ENCODE measurements at regions of chr15 and their contacts with region 1.

Region 1: GRCh38 chr15:94163999-94164807 is 67.2 kb upstream of the MCTP2 start:
- DNase-seq: peak in 1 of 2 donors; percentile 15
- ATAC-seq: peak in 1 of 4 donors; percentile 46
- H3K4me3 ChIP-seq: no peak overlapping the region
- H3K27ac ChIP-seq: no peak overlapping the region
- H3K4me1 ChIP-seq: no peaks in the 10 kb centered on the region
- H3K27me3 ChIP-seq: no peaks in the 10 kb centered on the region
- CTCF ChIP-seq: peak; percentile 56

Region 2: DNA sequence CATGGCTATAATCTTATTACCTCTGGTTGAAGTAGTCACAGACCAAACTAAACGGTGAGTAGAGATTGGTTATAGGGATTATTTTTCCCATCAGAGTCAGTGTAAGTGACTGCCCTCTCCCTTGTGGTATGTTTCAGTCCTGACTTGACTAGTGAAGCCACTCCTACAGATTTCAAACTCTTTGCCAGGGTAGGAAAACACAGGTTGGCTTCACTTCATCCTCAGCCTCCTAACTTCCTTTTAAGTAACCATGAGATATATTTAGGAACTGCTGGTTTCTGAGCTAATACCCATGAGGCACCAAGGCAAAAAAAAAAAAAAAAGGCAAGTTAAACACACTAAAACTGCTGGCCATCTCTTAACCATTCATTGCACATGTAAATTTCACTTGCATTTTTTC is 282.1 kb before region 1 on chr15:
- intact Hi-C with region 1: no loop called
- DNase-seq: no peak
- ATAC-seq: no peak
- H3K4me3 ChIP-seq: no peak overlapping the region
- H3K27ac ChIP-seq: no peak overlapping the region
- H3K4me1 ChIP-seq: no peaks in the 10 kb centered on the region
- H3K27me3 ChIP-seq: no peaks in the 10 kb centered on the region
- CTCF ChIP-seq: no peak

Region 3: GRCh38 chr15:94324117-94324826 is 160.1 kb after region 1 on chr15:
- intact Hi-C with region 1: loop called (anchors 2 to 5 kb)
- DNase-seq: peak in 1 of 2 donors; percentile 21
- ATAC-seq: peak; percentile 71 to 92 (median 87)
- H3K4me3 ChIP-seq: no peak overlapping the region
- H3K27ac ChIP-seq: no peak overlapping the region
- H3K4me1 ChIP-seq: no peaks in the 10 kb centered on the region
- H3K27me3 ChIP-seq: no peaks in the 10 kb centered on the region
- CTCF ChIP-seq: peak; percentile 81